Lower leg skin (tissue), 4 donors: ENCODE measurements at regions of chr10 and their contacts with region 1.

Region 1: GRCh38 chr10:72048450-72049124 is 39.8 kb downstream of the SPOCK2 start:
- DNase-seq: peak; percentile 92 to 98
- H3K4me3 ChIP-seq: no peak overlapping the region
- CTCF ChIP-seq: peak in 1 of 3 donors; percentile 99
- POLR2A ChIP-seq: no peak

Region 2: DNA sequence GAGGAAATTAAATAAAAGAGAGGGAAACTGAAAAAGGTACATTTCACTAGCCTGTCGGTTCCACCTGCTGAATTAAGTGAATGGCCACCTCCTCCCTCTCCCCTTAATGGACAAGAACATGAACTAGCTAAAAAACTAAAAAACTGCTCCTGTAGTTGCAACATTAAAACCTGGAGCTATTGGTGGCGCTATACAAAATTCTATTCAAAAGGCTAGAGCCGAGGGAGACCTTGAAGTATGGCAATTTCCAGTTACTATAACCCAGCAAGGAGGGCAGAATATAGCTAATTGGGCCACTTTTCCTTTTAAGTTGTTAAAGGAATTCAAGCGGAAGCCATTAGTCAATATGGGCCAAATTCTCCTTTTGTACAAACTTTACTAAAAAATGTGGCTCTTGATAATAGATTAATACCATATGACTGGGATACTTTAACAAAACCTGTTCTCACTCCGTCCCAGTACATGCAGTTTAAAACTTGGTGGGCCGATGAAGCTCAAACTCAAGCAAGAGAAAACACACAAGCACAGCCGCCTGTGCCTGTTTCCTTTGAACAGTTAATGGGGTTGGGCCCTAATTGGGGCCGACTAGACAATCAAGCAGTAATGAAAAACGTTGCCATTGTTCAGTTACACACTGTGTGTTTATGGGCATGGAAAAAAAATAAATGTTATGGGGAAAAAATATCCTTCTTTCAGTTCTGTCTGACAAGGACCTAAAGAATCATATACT is 90.9 kb before region 1 on chr10:
- intact Hi-C with region 1: loop called (anchors 5 kb)
- DNase-seq: peak in 1 of 2 donors; percentile 34
- H3K4me3 ChIP-seq: no peak overlapping the region
- CTCF ChIP-seq: no peak
- POLR2A ChIP-seq: no peak

Region 3: DNA sequence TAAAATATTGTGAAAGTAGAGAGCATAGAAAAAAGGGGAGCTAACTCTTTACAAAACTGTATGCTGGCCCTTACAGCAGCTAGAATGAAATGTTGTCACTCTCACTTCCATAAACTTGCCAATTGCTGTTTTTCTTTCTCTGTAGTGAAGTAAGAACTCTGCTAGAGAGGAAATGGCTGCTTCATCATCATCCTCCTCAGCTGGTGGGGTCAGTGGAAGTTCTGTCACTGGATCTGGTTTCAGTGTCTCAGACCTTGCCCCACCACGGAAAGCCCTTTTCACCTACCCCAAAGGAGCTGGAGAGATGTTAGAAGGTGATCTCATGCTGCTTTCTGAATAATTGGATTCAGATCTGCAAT is 175.1 kb after region 1 on chr10:
- intact Hi-C with region 1: loop called (anchors 5 kb)
- DNase-seq: no peak
- H3K4me3 ChIP-seq: no peak overlapping the region
- CTCF ChIP-seq: no peak
- POLR2A ChIP-seq: no peak

Region 4: GRCh38 chr10:72340510-72341261 is 292.1 kb after region 1 on chr10:
- intact Hi-C with region 1: loop called (anchors 5 kb)
- DNase-seq: peak in 1 of 2 donors; percentile 94
- H3K4me3 ChIP-seq: no peak overlapping the region
- CTCF ChIP-seq: peak in 1 of 3 donors; percentile 81
- POLR2A ChIP-seq: no peak